CD14-positive monocyte (primary cell): ENCODE measurements at regions of chr14 and their contacts with region 1.

Region 1: DNA sequence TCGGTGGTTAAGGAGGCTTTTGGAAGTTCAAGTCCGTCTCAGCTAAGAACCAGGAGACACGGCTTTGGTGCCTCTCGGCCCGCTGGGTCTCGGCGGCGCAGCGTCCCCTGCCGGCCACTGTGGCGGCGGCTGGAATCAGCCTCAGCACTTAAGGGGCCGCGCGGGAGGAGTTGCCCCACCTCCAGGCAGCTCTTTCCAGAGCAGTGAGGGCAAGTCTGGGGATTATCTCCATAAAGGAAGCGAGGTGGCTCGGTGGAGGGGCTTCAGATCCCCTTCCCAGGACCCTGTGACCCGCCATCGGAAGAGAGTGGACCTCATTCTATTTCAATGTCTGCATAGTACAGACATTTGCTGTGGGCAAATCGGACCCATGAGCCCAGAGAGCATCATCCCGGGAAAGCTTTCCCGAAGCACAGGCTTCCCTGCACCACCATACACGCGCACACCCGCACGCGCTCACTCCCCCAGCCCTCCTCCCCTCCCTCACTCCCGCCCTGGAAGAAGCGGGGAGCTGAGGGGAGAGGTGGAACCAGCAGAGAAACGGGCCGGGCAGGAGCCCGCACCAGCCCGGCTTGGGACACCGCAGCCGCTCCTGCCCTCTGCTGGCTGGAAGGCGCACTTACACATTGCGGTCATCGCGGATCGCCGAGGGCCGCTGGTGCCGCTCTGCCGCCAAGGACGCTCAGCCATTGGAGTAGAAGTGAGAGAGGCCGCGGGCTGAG is 15.9 kb downstream of the RNASE2 start:
- DNase-seq: peak; percentile 77 to 84 (median 83)
- H3K4me3 ChIP-seq: peak overlapping the region; percentile 70 to 92 (median 87)
- H3K4me3 Mint-ChIP-seq: peak overlapping the region; percentile 91 to 96
- H3K27ac ChIP-seq: peak overlapping the region in 1 of 2 donors; percentile 68
- H3K27ac Mint-ChIP-seq: peak overlapping the region; percentile 70 to 89 (median 85)
- H3K4me1 ChIP-seq: peaks cover 10 to 16% of the 10 kb centered on the region in 2 donors
- H3K4me1 Mint-ChIP-seq: peaks cover 24% of the 10 kb centered on the region
- H3K27me3 ChIP-seq: no peaks in the 10 kb centered on the region
- H3K27me3 Mint-ChIP-seq: peaks cover 4 to 11% (median 8%) of the 10 kb centered on the region in 3 donors
- CTCF ChIP-seq: peak; percentile 98

Region 2: DNA sequence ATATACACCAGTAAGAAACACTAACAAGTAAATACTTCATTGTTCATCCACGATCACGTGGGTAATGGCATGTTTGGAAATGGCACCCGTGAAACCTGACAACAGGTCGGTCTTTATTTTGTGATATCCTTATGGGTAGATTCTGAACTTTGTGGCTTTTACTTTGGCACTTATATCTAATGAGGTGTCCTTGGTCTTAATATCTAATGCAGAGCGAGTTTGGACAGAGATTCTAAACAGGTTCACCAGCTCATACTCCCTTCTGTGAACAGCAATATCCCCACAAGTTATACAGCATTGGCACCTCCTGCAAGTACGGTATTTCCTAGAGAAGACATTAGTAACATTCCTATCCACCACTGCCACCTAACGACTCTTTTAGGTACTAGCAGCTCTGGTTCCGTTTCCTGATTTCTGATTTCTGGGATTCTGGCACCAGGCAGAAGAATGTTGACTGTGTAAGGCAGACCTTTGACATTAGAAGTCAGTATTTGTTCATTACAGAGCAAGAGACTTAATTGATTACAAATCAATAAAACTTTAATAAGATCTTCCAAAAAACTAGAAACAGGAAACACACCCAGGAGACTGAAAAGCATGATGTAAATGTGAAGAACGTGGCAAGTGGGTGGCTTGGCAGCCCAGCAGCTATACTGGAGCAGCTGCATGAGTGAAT is 280.2 kb before region 1 on chr14:
- intact Hi-C with region 1: loop called (anchors 5 to 10 kb)
- DNase-seq: peak; percentile 56 to 84 (median 69)
- H3K4me3 ChIP-seq: no peak overlapping the region
- H3K4me3 Mint-ChIP-seq: no peak overlapping the region
- H3K27ac ChIP-seq: no peak overlapping the region
- H3K27ac Mint-ChIP-seq: no peak overlapping the region
- H3K4me1 ChIP-seq: peaks cover 6 to 9% of the 10 kb centered on the region in 2 donors
- H3K4me1 Mint-ChIP-seq: peaks cover 15% of the 10 kb centered on the region
- H3K27me3 ChIP-seq: no peaks in the 10 kb centered on the region
- H3K27me3 Mint-ChIP-seq: no peaks in the 10 kb centered on the region
- CTCF ChIP-seq: peak; percentile 91

Region 3: DNA sequence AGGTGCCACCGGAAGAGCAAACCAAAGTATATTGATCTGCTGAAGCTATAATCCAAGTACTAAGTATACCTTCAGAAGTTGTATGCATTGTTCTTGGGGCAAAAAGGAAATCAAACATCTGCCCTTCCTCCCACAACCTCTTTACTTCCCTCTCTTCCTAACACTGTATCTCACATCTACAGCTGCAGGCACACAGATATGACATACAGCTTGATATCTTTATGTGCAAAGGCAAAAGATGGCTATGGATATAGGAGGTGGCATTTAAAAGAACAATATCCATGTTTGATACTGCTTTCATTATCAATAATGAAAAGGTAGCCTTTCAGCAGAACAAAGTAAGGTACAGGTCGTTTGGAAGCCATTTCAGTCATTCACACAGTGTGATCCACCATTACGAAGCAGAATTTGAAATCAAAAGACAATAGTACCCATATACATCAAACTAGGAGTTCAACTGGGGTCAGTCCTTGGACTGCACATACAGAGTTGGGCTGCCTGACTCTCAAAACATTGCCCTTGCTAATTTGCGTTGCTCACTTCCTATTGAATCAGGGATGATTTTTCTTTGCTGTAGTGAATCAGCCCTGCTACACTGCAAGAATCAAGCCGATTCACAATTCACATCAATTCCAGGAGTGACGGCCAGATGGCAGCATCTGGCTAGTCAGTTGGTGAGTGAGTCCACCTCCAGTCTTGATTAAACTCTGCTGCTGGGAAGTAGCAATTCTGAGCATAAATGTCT is 273.7 kb before region 1 on chr14:
- intact Hi-C with region 1: loop called (anchors 5 to 10 kb)
- DNase-seq: peak; percentile 78 to 86 (median 83)
- H3K4me3 ChIP-seq: no peak overlapping the region
- H3K4me3 Mint-ChIP-seq: no peak overlapping the region
- H3K27ac ChIP-seq: peak overlapping the region in 1 of 2 donors; percentile 28
- H3K27ac Mint-ChIP-seq: peak overlapping the region in 4 of 7 donors; percentile 21 to 78 (median 40)
- H3K4me1 ChIP-seq: peaks cover 12 to 16% of the 10 kb centered on the region in 2 donors
- H3K4me1 Mint-ChIP-seq: peaks cover 14% of the 10 kb centered on the region
- H3K27me3 ChIP-seq: no peaks in the 10 kb centered on the region
- H3K27me3 Mint-ChIP-seq: no peaks in the 10 kb centered on the region
- CTCF ChIP-seq: peak; percentile 86

Region 4: DNA sequence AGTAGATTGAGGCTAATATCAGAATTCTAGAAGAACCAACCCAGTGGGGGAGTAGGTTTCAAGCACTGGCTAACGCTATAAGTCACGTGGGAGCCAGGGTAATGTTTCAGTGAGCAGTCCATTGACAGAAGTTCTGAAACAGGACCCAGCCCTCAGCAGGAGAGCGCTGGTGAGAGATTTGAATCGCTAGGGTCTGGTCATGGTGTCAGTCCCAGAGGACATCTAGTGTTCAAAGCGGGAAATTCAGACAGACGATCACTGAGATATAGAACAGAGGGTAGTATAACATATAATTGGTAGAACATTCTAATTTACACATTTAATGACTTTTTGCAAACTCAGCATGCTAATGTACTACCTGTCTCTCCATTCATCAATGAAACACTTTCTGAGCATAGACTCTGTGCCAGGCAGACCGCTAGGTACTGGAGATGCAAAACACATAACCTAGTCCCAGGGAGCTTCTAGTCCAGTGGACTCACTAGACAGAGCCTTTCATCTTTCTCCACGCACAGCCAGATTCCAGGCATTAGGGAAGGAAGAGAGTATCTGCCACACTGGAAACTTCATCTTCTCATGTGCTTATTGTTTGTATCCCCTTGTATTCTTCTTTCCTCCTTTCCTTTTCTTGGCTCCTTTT is 115.4 kb before region 1 on chr14:
- intact Hi-C with region 1: loop called (anchors 1 to 5 kb)
- DNase-seq: peak; percentile 67 to 86 (median 79)
- H3K4me3 ChIP-seq: no peak overlapping the region
- H3K4me3 Mint-ChIP-seq: no peak overlapping the region
- H3K27ac ChIP-seq: no peak overlapping the region
- H3K27ac Mint-ChIP-seq: peak overlapping the region in 1 of 7 donors; percentile 32
- H3K4me1 ChIP-seq: peaks cover 4 to 6% of the 10 kb centered on the region in 2 donors
- H3K4me1 Mint-ChIP-seq: peaks cover 11% of the 10 kb centered on the region
- H3K27me3 ChIP-seq: no peaks in the 10 kb centered on the region
- H3K27me3 Mint-ChIP-seq: peaks cover 0 to 2% (median 0%) of the 10 kb centered on the region in 3 donors
- CTCF ChIP-seq: peak; percentile 84